MCF 10A (cell line): ENCODE measurements at regions of chr5 and their contacts with region 1.

Region 1: DNA sequence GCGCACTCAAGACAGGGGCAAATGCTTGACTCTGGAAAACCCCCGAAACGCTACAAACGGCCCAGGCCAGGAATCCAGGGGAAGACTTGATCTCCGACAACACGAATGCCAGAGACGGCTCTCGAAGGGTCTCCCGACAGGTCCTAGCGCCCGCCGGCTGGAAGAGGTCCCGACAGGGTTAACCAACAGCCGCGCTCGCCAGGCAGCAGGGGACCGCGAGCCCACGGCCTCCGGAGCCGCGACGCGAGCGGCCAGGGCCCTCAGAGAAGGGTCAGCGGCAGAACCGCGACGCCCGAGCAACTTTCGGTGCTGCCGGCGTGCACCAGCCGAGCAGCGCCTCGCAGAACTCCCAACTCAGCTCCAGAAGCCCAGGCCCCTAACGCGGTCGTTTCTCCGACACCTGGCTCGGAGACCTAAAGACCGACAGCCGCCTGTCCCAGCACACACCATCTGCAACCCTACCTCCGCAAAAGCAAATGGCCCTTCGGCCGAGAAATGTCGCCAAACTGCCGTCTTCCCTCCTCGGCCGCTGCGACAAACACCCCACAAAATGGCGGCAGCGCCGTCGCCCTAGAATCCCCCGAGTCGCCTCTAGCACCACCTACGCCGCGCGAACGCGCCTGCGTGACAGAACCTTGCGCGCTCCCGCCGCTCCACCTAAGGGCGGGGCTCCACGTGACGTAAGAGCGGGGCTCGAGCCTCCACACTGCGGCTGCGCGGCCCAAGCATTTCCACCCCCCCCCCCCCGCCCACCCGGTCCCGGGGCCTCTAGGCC is at the start of gene CLK4:
- DNase-seq: peak; percentile 97
- H3K4me3 Mint-ChIP-seq: peak within 1 kb of the TSS; percentile 88
- H3K27ac Mint-ChIP-seq: peak within 1 kb of the TSS; percentile 100
- H3K4me1 Mint-ChIP-seq: peaks cover 32% of the 10 kb centered on the region
- H3K27me3 Mint-ChIP-seq: no peaks in the 10 kb centered on the region
- CTCF ChIP-seq: no peak
- total RNA-seq, gene CLK4: 49.3 and 51.7 TPM in 2 replicates

Region 2: DNA sequence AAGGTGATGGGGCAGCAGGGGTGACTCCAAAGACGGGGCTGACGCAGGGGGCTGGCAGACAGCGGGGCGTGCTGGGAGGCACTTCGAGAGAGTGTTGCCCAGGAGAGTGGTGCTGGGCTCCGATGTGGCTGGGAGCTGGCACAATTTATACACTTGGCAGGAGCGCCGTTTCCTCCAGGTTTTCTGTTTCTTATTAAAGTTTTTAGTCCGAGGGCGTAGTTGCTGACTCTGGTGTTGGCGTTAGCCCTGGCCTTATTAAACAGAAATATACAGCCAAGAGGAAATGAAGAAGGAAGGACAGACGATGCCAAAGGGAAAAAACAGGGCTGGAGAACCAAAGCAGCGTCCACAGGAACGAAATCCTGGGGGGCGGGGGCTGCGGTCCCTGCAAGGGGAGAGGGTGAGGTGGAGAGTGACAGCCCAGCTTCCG is 254.5 kb before region 1 on chr5:
- CTCF ChIA-PET with region 1: no interaction called
- POLR2A ChIA-PET with region 1: no interaction called
- intact Hi-C with region 1: no loop called
- DNase-seq: no peak
- H3K4me3 Mint-ChIP-seq: no peak overlapping the region
- H3K27ac Mint-ChIP-seq: no peak overlapping the region
- H3K4me1 Mint-ChIP-seq: peaks cover 7% of the 10 kb centered on the region
- H3K27me3 Mint-ChIP-seq: peaks cover 46% of the 10 kb centered on the region
- CTCF ChIP-seq: no peak

Region 3: DNA sequence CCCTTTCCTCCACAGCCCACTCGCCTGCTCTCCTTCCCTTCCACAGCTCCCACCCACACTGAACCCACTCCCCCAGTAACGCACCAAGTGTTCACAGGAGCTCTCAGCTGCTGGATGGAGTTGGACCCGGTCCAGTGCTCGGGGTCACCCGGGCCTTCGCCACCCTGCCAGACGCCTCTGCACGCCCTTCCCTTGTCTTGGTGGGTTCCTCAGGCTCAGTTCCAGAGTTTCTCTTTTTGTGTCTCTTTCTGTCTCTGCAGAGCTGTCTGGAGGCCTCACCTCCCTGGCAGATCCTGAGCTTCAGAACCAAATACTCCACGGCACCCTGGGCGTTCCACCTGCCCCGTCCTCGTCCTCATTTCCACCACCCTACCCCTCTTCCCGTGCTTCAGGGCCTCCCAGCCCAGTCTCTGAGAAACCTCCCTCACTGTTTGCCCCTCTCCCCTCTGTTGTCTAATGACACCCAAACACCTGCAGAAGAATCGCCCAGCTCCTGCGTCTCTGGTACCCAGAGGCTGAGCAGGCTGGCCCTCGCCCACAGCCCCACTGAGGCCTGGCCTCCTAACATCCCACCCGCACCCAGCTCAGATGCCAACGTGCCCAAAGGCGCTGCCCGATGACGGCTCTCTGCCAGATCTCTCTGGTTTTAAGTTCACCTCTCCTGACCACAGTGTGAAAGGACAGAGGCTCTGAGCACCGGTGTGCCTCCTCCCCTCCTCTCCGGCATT is 110.7 kb before region 1 on chr5:
- CTCF ChIA-PET with region 1: no interaction called
- POLR2A ChIA-PET with region 1: no interaction called
- intact Hi-C with region 1: no loop called
- DNase-seq: no peak
- H3K4me3 Mint-ChIP-seq: no peak overlapping the region
- H3K27ac Mint-ChIP-seq: no peak overlapping the region
- H3K4me1 Mint-ChIP-seq: no peaks in the 10 kb centered on the region
- H3K27me3 Mint-ChIP-seq: peaks cover 58% of the 10 kb centered on the region
- CTCF ChIP-seq: no peak

Region 4: GRCh38 chr5:178612299-178612698 is 14.4 kb before region 1 on chr5:
- CTCF ChIA-PET with region 1: interaction called, 7 read pairs
- POLR2A ChIA-PET with region 1: interaction called, 24 read pairs
- intact Hi-C with region 1: no loop called
- DNase-seq: no peak
- H3K4me3 Mint-ChIP-seq: no peak overlapping the region
- H3K27ac Mint-ChIP-seq: no peak overlapping the region
- H3K4me1 Mint-ChIP-seq: no peaks in the 10 kb centered on the region
- H3K27me3 Mint-ChIP-seq: no peaks in the 10 kb centered on the region
- CTCF ChIP-seq: no peak

Region 5: DNA sequence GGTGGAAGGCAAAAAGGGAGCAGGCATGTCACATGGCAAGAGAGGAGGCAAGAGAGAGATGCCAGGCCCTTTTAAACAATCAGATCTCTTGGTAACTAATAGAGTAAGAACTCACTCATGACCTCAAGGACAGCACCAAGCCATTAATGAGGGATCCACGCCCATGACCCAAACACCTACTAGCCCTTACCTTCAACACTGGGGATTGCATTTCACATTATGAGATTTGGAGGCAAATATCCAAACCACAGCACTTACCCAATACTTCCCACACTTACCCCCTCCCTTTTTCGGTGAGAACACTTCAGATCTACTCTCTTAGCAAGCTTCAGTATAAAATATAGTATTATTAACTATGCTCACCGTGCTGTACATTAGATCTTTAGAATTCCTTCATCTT is 61.9 kb after region 1 on chr5:
- CTCF ChIA-PET with region 1: no interaction called
- POLR2A ChIA-PET with region 1: interaction called, 11 read pairs
- intact Hi-C with region 1: loop called (anchors 2 kb)
- DNase-seq: peak; percentile 87
- H3K4me3 Mint-ChIP-seq: no peak overlapping the region
- H3K27ac Mint-ChIP-seq: peak overlapping the region; percentile 32
- H3K4me1 Mint-ChIP-seq: peaks cover 23% of the 10 kb centered on the region
- H3K27me3 Mint-ChIP-seq: no peaks in the 10 kb centered on the region
- CTCF ChIP-seq: no peak

Region 6: DNA sequence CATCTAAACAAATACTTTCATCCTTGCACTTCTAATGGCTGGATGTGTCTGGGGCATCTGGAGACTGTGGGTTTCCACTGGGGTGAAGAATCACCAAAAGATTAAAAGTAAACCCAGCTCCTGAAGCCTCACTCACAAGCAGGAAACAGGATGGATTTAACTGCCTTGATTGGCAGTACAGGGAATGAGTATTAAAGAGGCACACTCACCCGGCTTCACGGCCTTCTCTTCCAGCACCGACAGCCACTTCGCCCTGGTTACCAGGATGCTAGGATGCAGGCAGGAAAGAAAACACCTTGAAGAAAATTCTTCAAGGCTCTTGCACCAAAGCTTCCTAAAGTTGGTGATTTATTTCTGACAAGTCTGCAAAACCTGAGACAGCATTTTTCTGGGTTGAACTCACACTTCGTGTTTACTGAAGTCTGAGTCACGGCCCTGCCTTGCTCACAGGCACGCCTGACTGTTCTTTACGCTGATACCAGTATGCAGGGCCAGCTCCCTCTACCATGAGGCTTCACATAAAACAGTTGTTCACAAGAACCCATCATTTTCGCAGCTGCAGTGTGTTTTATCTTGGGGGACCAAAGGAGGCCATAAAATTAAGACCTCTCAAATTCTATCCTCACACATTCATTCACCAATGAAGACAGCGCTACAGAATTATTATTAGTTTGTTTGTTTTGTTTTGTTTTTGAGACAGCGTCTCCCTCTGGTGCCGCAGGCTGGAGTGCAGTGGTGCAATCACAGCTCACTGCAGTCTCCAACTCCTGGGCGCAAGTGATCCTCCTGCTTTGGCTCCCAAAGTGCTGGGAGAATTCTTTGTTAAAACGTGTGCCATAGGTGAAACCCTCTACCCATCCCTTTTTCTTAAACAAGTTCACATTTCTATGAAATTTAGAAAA is 160.4 kb after region 1 on chr5:
- CTCF ChIA-PET with region 1: interaction called, 5 read pairs
- POLR2A ChIA-PET with region 1: interaction called, 53 read pairs
- intact Hi-C with region 1: loop called (anchors 1 kb)
- DNase-seq: peak; percentile 96
- H3K4me3 Mint-ChIP-seq: peak overlapping the region; percentile 54
- H3K27ac Mint-ChIP-seq: peak overlapping the region; percentile 92
- H3K4me1 Mint-ChIP-seq: peaks cover 58% of the 10 kb centered on the region
- H3K27me3 Mint-ChIP-seq: no peaks in the 10 kb centered on the region
- CTCF ChIP-seq: peak; percentile 31

Region 7: DNA sequence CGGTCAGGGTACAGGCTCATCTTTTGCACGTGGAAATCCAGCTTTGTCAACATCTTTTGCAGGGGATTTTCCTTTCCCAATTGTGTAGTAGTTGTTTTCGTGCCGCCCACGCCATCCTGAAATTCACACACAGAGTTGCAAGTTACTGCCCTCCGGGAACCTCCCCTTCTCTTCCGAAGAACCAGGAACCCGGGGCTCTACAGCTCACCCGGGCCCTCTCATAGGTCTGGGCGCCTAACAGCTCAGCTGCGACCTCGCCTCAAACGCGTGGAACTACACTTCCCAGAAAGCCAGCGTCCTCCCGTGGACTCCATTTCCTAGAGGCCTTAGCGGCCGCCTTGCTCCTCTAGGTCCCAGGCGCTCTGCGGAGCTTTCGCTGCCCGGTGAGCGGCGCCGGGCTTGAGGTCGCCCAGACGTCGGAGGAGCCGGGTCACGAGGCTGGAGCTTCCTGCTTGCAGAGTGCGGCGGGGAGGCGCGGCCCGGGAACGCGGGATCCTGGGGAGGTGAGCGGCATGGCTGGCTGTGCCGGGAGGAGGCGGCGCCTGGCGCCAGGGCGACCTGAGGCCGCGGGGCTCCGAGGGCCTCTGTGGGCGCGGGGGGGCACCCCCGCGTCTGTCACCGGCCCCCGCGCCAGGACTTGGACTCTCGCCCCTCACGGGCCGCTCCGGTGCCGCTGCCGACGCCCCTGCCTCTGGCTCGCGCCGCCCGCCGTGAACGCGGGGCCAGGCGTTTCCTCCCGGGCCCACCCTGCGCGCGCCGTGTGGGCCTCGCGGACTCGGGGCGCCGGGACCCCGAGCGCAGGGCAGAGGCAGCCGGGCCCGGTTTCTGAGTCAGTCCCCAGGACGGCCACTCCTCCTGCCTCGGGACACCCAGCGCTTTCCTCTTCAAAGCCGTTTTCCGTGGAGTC is 233.2 kb after region 1 on chr5 and contains the start of gene ZNF354B:
- CTCF ChIA-PET with region 1: no interaction called
- POLR2A ChIA-PET with region 1: interaction called, 17 read pairs
- intact Hi-C with region 1: no loop called
- DNase-seq: peak; percentile 98
- H3K4me3 Mint-ChIP-seq: peak within 1 kb of the TSS; percentile 77
- H3K27ac Mint-ChIP-seq: peak within 1 kb of the TSS; percentile 61
- H3K4me1 Mint-ChIP-seq: peaks cover 26% of the 10 kb centered on the region
- H3K27me3 Mint-ChIP-seq: no peaks in the 10 kb centered on the region
- CTCF ChIP-seq: peak; percentile 15
- total RNA-seq, gene ZNF354B: 24.4 and 24.8 TPM in 2 replicates